BJ (cell line): ENCODE measurements at regions of chr14 and their contacts with region 1.

Region 1: GRCh38 chr14:99971087-99971940 is 93.9 kb upstream of the EVL start:
- DNase-seq: no peak
- H3K4me3 ChIP-seq: peak overlapping the region; percentile 91
- H3K27me3 ChIP-seq: no peaks in the 10 kb centered on the region
- CTCF ChIP-seq: no peak

Region 2: GRCh38 chr14:99537399-99537798 is 433.9 kb before region 1 on chr14:
- CTCF ChIA-PET with region 1: no interaction called
- POLR2A ChIA-PET with region 1: no interaction called
- DNase-seq: peak; percentile 33
- H3K4me3 ChIP-seq: no peak overlapping the region
- H3K27me3 ChIP-seq: no peaks in the 10 kb centered on the region
- CTCF ChIP-seq: no peak

Region 3: GRCh38 chr14:99831903-99832685 is 139.2 kb before region 1 on chr14:
- CTCF ChIA-PET with region 1: no interaction called
- POLR2A ChIA-PET with region 1: no interaction called
- DNase-seq: no peak
- H3K4me3 ChIP-seq: no peak overlapping the region
- H3K27me3 ChIP-seq: peaks cover 4% of the 10 kb centered on the region
- CTCF ChIP-seq: no peak

Region 4: GRCh38 chr14:99918781-99919180 is 52.5 kb before region 1 on chr14:
- CTCF ChIA-PET with region 1: no interaction called
- POLR2A ChIA-PET with region 1: interaction called, 14 read pairs
- DNase-seq: no peak
- H3K4me3 ChIP-seq: no peak overlapping the region
- H3K27me3 ChIP-seq: no peaks in the 10 kb centered on the region
- CTCF ChIP-seq: no peak